Psoas muscle (tissue), 8 donors: ENCODE measurements at regions of chr15 and their contacts with region 1.

Region 1: DNA sequence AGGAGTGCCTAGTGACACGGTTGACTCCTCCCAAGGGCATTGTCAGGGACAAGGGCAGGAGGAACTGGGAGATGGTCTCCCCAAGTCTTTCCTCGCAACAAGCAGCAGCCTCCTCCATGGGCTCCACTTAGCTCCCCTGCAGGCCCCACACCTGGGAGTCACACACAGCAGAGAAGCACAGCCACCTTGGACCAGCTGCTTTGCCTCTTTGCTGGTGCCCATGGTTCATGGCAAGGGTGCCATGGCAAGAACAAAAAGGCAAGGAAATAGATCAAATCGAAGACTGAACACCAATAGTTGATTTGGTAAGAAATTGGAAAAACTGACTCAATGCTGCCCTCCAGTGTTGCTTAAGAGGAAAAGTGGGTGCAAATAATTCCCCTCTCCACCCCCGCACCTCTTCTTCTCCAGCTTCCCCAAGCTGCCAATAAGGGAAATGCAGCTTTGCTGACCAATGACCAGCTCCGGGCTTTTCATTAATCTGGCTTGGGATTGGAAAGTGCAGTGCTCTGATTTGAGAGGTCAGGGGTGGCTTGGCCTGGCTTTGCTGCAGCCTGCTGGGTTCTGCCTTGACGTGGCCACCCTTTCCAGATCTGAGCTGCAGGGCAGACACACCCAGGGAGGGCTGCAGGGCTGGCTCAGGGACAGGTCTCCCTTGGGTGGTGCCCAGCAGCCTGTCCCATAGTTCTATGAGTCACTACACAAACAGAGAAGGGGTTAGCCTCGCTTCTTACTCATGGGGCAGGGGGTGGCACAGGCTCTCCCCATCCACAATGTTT is 162.0 kb downstream of the KLF13 start:
- DNase-seq: peak in 1 of 2 donors; percentile 27
- ATAC-seq: peak; percentile 67 to 88 (median 74)
- H3K4me3 ChIP-seq: no peak overlapping the region
- H3K27ac ChIP-seq: no peak overlapping the region
- H3K4me1 ChIP-seq: peaks cover 13% of the 10 kb centered on the region
- H3K27me3 ChIP-seq: peaks cover 0 to 5% (median 0%) of the 10 kb centered on the region in 3 donors
- CTCF ChIP-seq: peak; percentile 76

Region 2: GRCh38 chr15:31200735-31201151 is 287.9 kb before region 1 on chr15:
- intact Hi-C with region 1: loop called (anchors 5 kb)
- DNase-seq: peak; percentile 65 to 81
- ATAC-seq: peak; percentile 72 to 98 (median 94)
- H3K4me3 ChIP-seq: no peak overlapping the region
- H3K27ac ChIP-seq: no peak overlapping the region
- H3K4me1 ChIP-seq: no peaks in the 10 kb centered on the region
- H3K27me3 ChIP-seq: no peaks in the 10 kb centered on the region
- CTCF ChIP-seq: peak; percentile 47

Region 3: GRCh38 chr15:31311735-31312619 is 176.6 kb before region 1 on chr15:
- intact Hi-C with region 1: loop called in 1 of 2 experiments (anchors 10 kb)
- DNase-seq: no peak
- ATAC-seq: no peak
- H3K4me3 ChIP-seq: no peak overlapping the region
- H3K27ac ChIP-seq: no peak overlapping the region
- H3K4me1 ChIP-seq: no peaks in the 10 kb centered on the region
- H3K27me3 ChIP-seq: peaks cover 0 to 6% (median 5%) of the 10 kb centered on the region in 3 donors
- CTCF ChIP-seq: no peak

Region 4: DNA sequence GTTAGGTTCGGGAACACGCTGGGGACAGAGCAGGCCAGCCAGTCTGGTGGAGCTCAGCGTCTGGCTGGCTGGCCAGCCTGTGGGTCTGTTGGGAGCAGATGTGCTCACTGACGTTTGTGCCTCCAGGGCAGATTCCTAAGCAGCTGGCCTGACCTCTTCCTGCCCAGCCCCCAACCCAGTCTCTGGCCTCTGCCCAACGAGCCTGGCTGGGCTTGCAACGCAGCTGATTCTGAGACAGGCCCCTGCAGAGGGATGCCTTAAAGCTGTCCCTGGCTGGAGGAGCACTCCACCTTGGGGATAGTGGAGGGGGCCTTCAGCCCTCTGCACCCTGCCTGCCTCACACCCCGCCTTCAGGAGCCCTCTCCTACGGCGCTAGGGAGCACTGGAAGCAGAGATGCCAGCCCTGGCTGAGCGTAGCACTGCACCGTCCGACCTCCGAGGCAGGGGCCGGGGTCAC is 116.0 kb before region 1 on chr15:
- intact Hi-C with region 1: loop called in 1 of 2 experiments (anchors 10 kb)
- DNase-seq: peak; percentile 73 to 92
- ATAC-seq: peak; percentile 67 to 84 (median 76)
- H3K4me3 ChIP-seq: no peak overlapping the region
- H3K27ac ChIP-seq: peak overlapping the region; percentile 23
- H3K4me1 ChIP-seq: peaks cover 40% of the 10 kb centered on the region
- H3K27me3 ChIP-seq: no peaks in the 10 kb centered on the region
- CTCF ChIP-seq: no peak